OCI-LY7 (cell line): ENCODE measurements at regions of chr6 and their contacts with region 1.

Region 1: GRCh38 chr6:33477864-33478263 is 23.5 kb downstream of the ZBTB9 start:
- DNase-seq: no peak
- H3K4me3 ChIP-seq: no peak overlapping the region
- H3K27ac ChIP-seq: no peak overlapping the region
- H3K4me1 ChIP-seq: no peaks in the 10 kb centered on the region
- CTCF ChIP-seq: no peak

Region 2: GRCh38 chr6:33535104-33535603 is 57.3 kb after region 1 on chr6:
- CTCF ChIA-PET with region 1: no interaction called
- POLR2A ChIA-PET with region 1: no interaction called
- intact Hi-C with region 1: loop called (anchors 10 kb)
- DNase-seq: no peak
- H3K4me3 ChIP-seq: no peak overlapping the region
- H3K27ac ChIP-seq: no peak overlapping the region
- H3K4me1 ChIP-seq: no peaks in the 10 kb centered on the region
- CTCF ChIP-seq: 0 out of 2 replicates have a peak, but pooled peaks have one; percentile 12